ENCODE measurements at regions of chr6 and their contacts with region 1.

Region 1: DNA sequence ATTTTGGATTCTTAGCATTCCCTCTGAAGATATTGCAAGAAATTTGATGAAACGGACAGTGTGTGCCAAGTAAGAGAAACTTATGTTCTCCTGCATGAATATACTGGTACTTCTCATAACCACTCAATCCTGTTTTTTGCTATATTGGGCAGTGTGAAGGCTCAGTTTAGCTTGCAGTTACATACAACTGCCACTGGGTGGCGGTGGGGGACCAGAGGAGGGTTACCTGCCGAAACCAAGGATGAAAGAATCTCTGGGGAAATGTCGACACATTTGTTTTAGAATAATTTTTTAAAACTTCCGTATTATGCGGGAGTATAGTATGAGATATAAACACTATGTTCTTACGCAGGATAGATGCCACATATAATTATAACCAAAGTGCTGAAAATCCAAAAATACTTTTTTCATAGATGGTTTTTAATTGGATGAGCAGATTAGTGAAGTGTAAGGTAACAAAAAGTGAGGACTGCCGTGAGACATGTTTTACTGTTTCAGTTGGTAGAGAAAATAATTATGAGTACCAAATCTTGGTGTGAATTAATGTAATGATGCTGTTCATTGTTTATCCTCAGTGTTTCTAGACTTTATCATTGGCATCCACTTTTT is 9.7 kb downstream of the TRMT11 start:
- DNase-seq: peak; percentile 85
- H3K4me3 Mint-ChIP-seq: peak overlapping the region; percentile 47
- H3K27ac Mint-ChIP-seq: no peak overlapping the region
- H3K4me1 Mint-ChIP-seq: peaks cover 20% of the 10 kb centered on the region
- H3K27me3 Mint-ChIP-seq: no peaks in the 10 kb centered on the region
- CTCF ChIP-seq: peak; percentile 82

Region 2: GRCh38 chr6:125913864-125914351 is 82.2 kb before region 1 on chr6:
- CTCF ChIA-PET with region 1: no interaction called
- POLR2A ChIA-PET with region 1: no interaction called
- intact Hi-C with region 1: no loop called
- DNase-seq: peak; percentile 97
- H3K4me3 Mint-ChIP-seq: no peak overlapping the region
- H3K27ac Mint-ChIP-seq: peak overlapping the region; percentile 94
- H3K4me1 Mint-ChIP-seq: peaks cover 46% of the 10 kb centered on the region
- H3K27me3 Mint-ChIP-seq: no peaks in the 10 kb centered on the region
- CTCF ChIP-seq: no peak

Region 3: DNA sequence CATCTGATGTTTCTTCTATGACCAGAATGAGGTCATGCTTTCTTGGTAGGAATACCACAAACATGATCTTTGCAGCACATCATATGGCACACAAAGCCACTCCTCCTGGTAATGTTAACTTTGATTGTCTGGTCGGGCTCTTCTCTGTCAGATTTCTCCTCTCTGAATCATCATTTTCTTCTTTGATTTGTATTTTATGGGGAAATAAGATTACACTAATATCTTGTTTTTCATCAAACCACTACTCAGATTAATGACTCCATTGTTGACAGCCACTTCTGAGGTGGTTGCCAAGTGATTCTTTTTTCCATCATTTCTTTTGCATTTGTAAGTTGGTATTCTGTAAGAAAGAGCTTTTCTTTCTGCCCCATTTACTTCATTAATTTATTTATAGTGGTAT is 19.8 kb after region 1 on chr6:
- CTCF ChIA-PET with region 1: interaction called, 25 read pairs
- POLR2A ChIA-PET with region 1: interaction called, 3 read pairs
- intact Hi-C with region 1: no loop called
- DNase-seq: no peak
- H3K4me3 Mint-ChIP-seq: no peak overlapping the region
- H3K27ac Mint-ChIP-seq: no peak overlapping the region
- H3K4me1 Mint-ChIP-seq: peaks cover 6% of the 10 kb centered on the region
- H3K27me3 Mint-ChIP-seq: no peaks in the 10 kb centered on the region
- CTCF ChIP-seq: no peak

Region 4: DNA sequence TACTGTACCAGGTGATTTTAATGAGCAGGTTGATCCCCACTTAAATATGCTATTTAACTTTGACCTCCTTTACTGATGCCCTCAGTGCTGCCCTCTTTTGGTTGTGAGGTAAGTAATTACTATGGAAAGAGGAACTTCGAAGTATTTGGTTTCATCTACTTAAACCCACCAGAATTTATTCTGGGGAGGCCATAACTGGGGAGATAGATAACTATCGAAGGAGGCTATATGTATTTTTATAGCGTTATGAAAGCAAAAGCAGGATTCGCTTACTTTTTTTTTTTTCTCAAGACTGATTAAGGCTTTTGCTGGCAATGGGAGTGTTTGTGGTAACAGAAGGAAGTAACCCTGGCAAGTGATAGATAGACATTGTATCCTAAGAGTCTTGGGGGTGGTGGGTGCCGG is 174.9 kb after region 1 on chr6:
- CTCF ChIA-PET with region 1: interaction called, 4 read pairs
- POLR2A ChIA-PET with region 1: no interaction called
- intact Hi-C with region 1: loop called (anchors 1 kb)
- DNase-seq: peak; percentile 60
- H3K4me3 Mint-ChIP-seq: no peak overlapping the region
- H3K27ac Mint-ChIP-seq: no peak overlapping the region
- H3K4me1 Mint-ChIP-seq: no peaks in the 10 kb centered on the region
- H3K27me3 Mint-ChIP-seq: no peaks in the 10 kb centered on the region
- CTCF ChIP-seq: peak; percentile 53

Region 5: DNA sequence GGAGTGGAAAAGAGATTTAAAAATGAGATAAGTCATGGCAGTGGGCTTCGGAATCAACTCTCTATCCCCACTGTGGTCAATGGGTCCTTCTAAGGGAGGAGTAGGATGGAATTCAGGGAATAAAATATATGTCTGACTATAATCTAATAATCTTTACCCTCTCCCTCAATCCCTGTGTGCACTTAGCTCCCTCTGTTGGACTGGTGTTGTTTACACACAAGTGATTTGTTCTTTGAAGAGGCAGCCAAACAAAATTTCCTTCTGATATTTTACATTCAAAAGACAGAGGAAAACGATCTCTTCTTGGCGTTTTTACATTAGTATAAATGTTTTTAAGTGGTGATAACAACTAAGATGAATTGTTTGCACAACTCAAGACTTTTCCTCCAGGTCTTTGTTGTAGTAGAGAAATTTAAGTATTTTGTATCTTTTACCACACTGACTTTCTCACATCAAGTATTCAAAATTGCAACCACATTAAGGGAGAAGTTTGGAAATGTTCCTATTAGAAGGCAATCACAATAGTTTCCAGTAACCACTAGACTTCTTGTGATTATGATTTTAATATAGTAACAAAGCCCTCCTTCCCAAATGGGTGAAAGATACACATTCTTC is 661.6 kb after region 1 on chr6:
- CTCF ChIA-PET with region 1: interaction called, 19 read pairs
- POLR2A ChIA-PET with region 1: interaction called, 4 read pairs
- intact Hi-C with region 1: loop called (anchors 1 kb)
- DNase-seq: peak; percentile 52
- H3K4me3 Mint-ChIP-seq: no peak overlapping the region
- H3K27ac Mint-ChIP-seq: no peak overlapping the region
- H3K4me1 Mint-ChIP-seq: no peaks in the 10 kb centered on the region
- H3K27me3 Mint-ChIP-seq: peaks cover 24% of the 10 kb centered on the region
- CTCF ChIP-seq: peak; percentile 66

Region 6: GRCh38 chr6:127069659-127070279 is 1073.7 kb after region 1 on chr6:
- CTCF ChIA-PET with region 1: no interaction called
- POLR2A ChIA-PET with region 1: no interaction called
- intact Hi-C with region 1: loop called (anchors 1 kb)
- DNase-seq: peak; percentile 29
- H3K4me3 Mint-ChIP-seq: no peak overlapping the region
- H3K27ac Mint-ChIP-seq: no peak overlapping the region
- H3K4me1 Mint-ChIP-seq: no peaks in the 10 kb centered on the region
- H3K27me3 Mint-ChIP-seq: peaks cover 21% of the 10 kb centered on the region
- CTCF ChIP-seq: peak; percentile 48

Region 7: GRCh38 chr6:127120787-127121636 is 1124.9 kb after region 1 on chr6:
- CTCF ChIA-PET with region 1: interaction called, 4 read pairs
- POLR2A ChIA-PET with region 1: no interaction called
- intact Hi-C with region 1: loop called (anchors 2 kb)
- DNase-seq: peak; percentile 68
- H3K4me3 Mint-ChIP-seq: no peak overlapping the region
- H3K27ac Mint-ChIP-seq: no peak overlapping the region
- H3K4me1 Mint-ChIP-seq: peaks cover 4% of the 10 kb centered on the region
- H3K27me3 Mint-ChIP-seq: peaks cover 99% of the 10 kb centered on the region
- CTCF ChIP-seq: peak; percentile 84

Measured in MCF 10A (cell line).